ENCODE measurements at regions of chr14 and their contacts with region 1.

Region 1: DNA sequence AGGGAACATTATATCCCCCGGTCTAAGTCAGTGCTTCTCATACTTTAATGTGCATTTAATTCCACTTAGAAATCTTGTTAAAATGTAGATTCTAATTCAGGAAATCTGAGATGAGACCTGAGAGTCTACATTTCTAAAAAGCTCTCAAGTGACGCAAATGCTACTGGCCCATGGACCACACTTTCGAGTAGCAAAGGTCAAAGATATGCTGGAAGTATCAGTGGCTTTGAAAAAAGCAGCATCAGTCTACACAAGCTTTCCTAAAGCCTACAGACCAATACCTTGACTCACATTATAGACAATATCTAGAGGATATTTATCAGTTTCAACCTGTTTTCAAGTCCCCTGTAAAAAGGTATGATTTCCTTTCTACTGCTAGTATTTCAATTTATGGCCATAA is 248.6 kb downstream of the CEP128 start:
- DNase-seq: no peak
- H3K4me3 Mint-ChIP-seq: no peak overlapping the region
- H3K27ac Mint-ChIP-seq: no peak overlapping the region
- H3K4me1 Mint-ChIP-seq: no peaks in the 10 kb centered on the region
- H3K27me3 Mint-ChIP-seq: no peaks in the 10 kb centered on the region

Region 2: GRCh38 chr14:80475074-80475473 is 217.8 kb before region 1 on chr14:
- CTCF ChIA-PET with region 1: no interaction called
- POLR2A ChIA-PET with region 1: no interaction called
- intact Hi-C with region 1: no loop called
- DNase-seq: no peak
- H3K4me3 Mint-ChIP-seq: no peak overlapping the region
- H3K27ac Mint-ChIP-seq: no peak overlapping the region
- H3K4me1 Mint-ChIP-seq: no peaks in the 10 kb centered on the region
- H3K27me3 Mint-ChIP-seq: no peaks in the 10 kb centered on the region

Region 3: GRCh38 chr14:80726211-80726610 is 33.3 kb after region 1 on chr14:
- CTCF ChIA-PET with region 1: no interaction called
- POLR2A ChIA-PET with region 1: no interaction called
- intact Hi-C with region 1: loop called (anchors 1 kb)
- DNase-seq: no peak
- H3K4me3 Mint-ChIP-seq: no peak overlapping the region
- H3K27ac Mint-ChIP-seq: no peak overlapping the region
- H3K4me1 Mint-ChIP-seq: no peaks in the 10 kb centered on the region
- H3K27me3 Mint-ChIP-seq: no peaks in the 10 kb centered on the region